Gastrocnemius medialis (tissue), 4 donors: ENCODE measurements at regions of chr20 and their contacts with region 1.

Region 1: GRCh38 chr20:4956200-4956810 is 45.0 kb downstream of the SLC23A2 start:
- DNase-seq: no peak
- ATAC-seq: peak in 1 of 2 donors; percentile 46
- H3K4me3 ChIP-seq: no peak overlapping the region
- H3K27ac ChIP-seq: no peak overlapping the region
- H3K4me1 ChIP-seq: peaks cover 0 to 3% of the 10 kb centered on the region in 2 donors
- H3K27me3 ChIP-seq: no peaks in the 10 kb centered on the region
- CTCF ChIP-seq: peak; percentile 26 to 78 (median 73)
- POLR2A ChIP-seq: no peak

Region 2: DNA sequence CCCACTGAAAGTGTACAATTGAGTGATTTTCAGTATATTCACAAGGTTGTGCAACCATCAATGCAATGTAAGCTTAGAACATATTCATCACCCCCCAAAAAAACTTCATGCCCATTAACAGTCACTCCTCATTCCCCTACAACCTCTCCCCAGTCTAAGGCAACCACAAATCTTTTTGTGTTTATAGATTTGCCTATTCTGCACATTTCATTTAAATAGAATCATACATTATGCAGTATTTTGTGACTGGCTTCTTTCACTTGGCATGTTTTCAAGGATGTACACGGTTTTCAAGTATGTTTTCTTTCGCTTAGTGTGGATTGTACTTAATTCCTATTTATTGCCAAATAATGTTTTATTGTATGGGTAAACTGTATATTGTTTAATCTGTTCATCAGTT is 611.6 kb before region 1 on chr20:
- in situ Hi-C with region 1: no loop called
- intact Hi-C with region 1: no loop called
- DNase-seq: no peak
- ATAC-seq: no peak
- H3K4me3 ChIP-seq: no peak overlapping the region
- H3K27ac ChIP-seq: no peak overlapping the region
- H3K4me1 ChIP-seq: no peaks in the 10 kb centered on the region
- H3K27me3 ChIP-seq: no peaks in the 10 kb centered on the region
- CTCF ChIP-seq: no peak
- POLR2A ChIP-seq: no peak

Region 3: GRCh38 chr20:4763723-4764510 is 192.4 kb before region 1 on chr20:
- in situ Hi-C with region 1: loop called in 1 of 4 experiments (anchors 5 kb)
- intact Hi-C with region 1: no loop called
- DNase-seq: no peak
- ATAC-seq: no peak
- H3K4me3 ChIP-seq: no peak overlapping the region
- H3K27ac ChIP-seq: no peak overlapping the region
- H3K4me1 ChIP-seq: peaks cover 0 to 5% of the 10 kb centered on the region in 2 donors
- H3K27me3 ChIP-seq: peaks cover 0 to 6% (median 5%) of the 10 kb centered on the region in 3 donors
- CTCF ChIP-seq: no peak
- POLR2A ChIP-seq: no peak

Region 4: GRCh38 chr20:4774207-4774606 is 182.1 kb before region 1 on chr20:
- in situ Hi-C with region 1: loop called in 1 of 4 experiments (anchors 5 kb)
- intact Hi-C with region 1: no loop called
- DNase-seq: no peak
- ATAC-seq: no peak
- H3K4me3 ChIP-seq: no peak overlapping the region
- H3K27ac ChIP-seq: no peak overlapping the region
- H3K4me1 ChIP-seq: no peaks in the 10 kb centered on the region
- H3K27me3 ChIP-seq: no peaks in the 10 kb centered on the region
- CTCF ChIP-seq: no peak
- POLR2A ChIP-seq: no peak